ENCODE measurements at regions of chr3 and their contacts with region 1.

Region 1: GRCh38 chr3:138732456-138732855 is 102.3 kb downstream of the PIK3CB start:
- DNase-seq: no peak
- ATAC-seq: no peak
- H3K4me3 ChIP-seq: no peak overlapping the region
- H3K27ac ChIP-seq: no peak overlapping the region
- H3K4me1 ChIP-seq: no peaks in the 10 kb centered on the region
- H3K27me3 ChIP-seq: no peaks in the 10 kb centered on the region
- CTCF ChIP-seq: no peak

Region 2: GRCh38 chr3:138542977-138543376 is 189.5 kb before region 1 on chr3:
- intact Hi-C with region 1: no loop called
- DNase-seq: no peak
- ATAC-seq: peak in 1 of 8 donors; percentile 55
- H3K4me3 ChIP-seq: no peak overlapping the region
- H3K27ac ChIP-seq: no peak overlapping the region
- H3K4me1 ChIP-seq: no peaks in the 10 kb centered on the region
- H3K27me3 ChIP-seq: no peaks in the 10 kb centered on the region
- CTCF ChIP-seq: no peak

Region 3: GRCh38 chr3:140206196-140207048 is 1474.0 kb after region 1 on chr3:
- intact Hi-C with region 1: loop called in 1 of 10 experiments (anchors 5 kb)
- DNase-seq: peak in 1 of 2 donors; percentile 17
- ATAC-seq: peak in 5 of 8 donors; percentile 37 to 87 (median 59)
- H3K4me3 ChIP-seq: no peak overlapping the region
- H3K27ac ChIP-seq: no peak overlapping the region
- H3K4me1 ChIP-seq: peaks cover 0 to 14% (median 0%) of the 10 kb centered on the region in 9 donors
- H3K27me3 ChIP-seq: peaks cover 0 to 4% (median 0%) of the 10 kb centered on the region in 7 donors
- CTCF ChIP-seq: peak in 7 of 9 donors; percentile 19 to 56 (median 31)